Dorsolateral prefrontal cortex (tissue), 120 donors: ENCODE measurements at regions of chr16 and their contacts with region 1.

Region 1: DNA sequence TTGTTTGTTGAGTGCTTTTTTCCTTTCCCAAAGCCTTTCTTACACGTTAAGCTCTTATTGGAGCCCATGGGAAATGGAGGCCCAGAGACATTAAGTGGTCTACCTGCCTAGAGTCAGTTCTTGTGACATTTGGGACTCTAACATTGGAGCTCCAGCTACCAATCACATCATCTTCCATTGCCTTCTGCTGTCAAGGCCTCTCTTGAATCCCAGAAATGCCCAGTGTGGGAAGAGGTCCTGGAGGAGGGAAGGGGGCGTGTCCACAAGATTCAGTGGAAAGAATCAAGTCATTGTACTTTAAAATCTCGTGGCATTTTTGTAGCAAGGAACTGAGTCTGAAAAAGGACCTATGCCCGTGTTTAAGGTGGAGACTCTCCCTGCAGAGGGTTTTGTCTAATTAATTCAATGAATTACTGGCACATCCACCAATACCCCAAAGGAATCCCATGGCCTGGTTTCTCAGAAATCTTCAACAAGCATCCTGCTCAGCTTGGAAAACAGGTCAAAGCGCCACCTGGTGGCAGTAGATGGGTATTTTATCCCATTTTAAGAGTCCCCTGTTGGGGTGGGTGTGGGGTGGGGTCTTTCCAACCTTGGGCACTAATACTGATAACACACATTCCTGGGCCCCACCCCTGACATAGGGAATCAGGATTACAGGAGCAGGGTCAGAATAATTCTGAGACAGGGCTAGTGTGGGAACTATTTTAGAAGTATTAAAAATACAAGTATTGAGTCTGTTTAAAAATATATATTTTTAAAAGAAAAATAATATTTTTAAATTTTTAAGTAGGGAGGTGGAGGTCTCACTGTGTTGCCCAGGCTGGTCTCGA is 24.6 kb downstream of the GPT2 start:
- DNase-seq: peak in 4 of 10 donors; percentile 48 to 65 (median 60)
- H3K4me3 ChIP-seq: no peak overlapping the region
- H3K27ac ChIP-seq: peak overlapping the region in 57 of 59 donors; percentile 43 to 97 (median 88)
- H3K27me3 ChIP-seq: no peaks in the 10 kb centered on the region
- CTCF ChIP-seq: peak; percentile 75 to 94 (median 86)

Region 2: DNA sequence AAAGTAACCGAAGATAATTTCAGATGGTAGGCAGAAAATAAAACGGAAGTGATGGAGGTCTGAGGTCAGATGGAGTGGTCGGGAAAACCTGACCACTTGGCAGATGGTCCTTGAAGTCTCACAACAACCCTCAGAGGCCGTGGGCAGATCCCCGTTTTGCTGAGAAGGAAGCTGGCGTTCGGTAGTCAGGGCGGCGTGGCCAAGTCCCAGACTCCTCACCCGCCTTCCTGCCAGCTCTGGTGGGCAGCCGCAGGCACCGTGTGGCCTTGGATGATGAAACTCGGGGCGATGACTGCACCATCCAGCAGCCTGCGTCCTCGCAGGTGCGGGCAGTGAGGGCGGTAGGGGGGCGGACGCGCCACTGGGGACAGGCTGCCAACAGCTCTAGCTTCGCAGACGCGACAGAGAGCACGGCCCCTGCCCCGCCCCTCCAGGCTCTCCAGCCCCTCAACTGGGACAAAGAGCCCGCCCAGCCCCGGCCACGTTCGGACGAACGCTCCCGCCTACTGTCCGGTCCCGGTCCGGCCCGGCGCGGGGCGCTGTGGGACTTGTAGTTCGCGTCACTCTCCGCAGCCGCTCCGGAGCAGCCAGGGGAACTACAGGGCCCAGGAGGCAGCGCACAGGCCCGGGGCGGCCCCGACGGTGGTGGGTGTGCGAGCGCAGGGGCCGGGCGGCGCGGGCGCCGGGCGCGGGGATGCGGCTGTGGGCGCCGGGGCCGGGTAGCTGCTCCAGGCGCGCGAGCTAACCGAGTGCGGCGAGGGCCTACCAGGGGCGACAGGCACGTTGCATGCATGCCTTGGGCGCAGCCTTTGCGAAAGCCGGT is 24.9 kb before region 1 on chr16 and contains the start of gene GPT2:
- intact Hi-C with region 1: loop called (anchors 1 to 2 kb)
- DNase-seq: peak; percentile 96 to 100 (median 98)
- H3K4me3 ChIP-seq: peak within 1 kb of the TSS; percentile 61 to 98 (median 91)
- H3K27ac ChIP-seq: peak within 1 kb of the TSS; percentile 48 to 97 (median 90)
- H3K27me3 ChIP-seq: no peaks in the 10 kb centered on the region
- CTCF ChIP-seq: peak in 49 of 56 donors; percentile 9 to 69 (median 48)
- total RNA-seq, gene GPT2: 45.9 to 230 (median 67.8) TPM

Region 3: GRCh38 chr16:46929378-46930332 is 20.9 kb after region 1 on chr16:
- intact Hi-C with region 1: loop called in 1 of 2 experiments (anchors 2 kb)
- DNase-seq: peak; percentile 66 to 88 (median 80)
- H3K4me3 ChIP-seq: no peak overlapping the region
- H3K27ac ChIP-seq: peak overlapping the region in 55 of 59 donors; percentile 18 to 86 (median 66)
- H3K27me3 ChIP-seq: no peaks in the 10 kb centered on the region
- CTCF ChIP-seq: peak; percentile 76 to 98 (median 94)

Region 4: DNA sequence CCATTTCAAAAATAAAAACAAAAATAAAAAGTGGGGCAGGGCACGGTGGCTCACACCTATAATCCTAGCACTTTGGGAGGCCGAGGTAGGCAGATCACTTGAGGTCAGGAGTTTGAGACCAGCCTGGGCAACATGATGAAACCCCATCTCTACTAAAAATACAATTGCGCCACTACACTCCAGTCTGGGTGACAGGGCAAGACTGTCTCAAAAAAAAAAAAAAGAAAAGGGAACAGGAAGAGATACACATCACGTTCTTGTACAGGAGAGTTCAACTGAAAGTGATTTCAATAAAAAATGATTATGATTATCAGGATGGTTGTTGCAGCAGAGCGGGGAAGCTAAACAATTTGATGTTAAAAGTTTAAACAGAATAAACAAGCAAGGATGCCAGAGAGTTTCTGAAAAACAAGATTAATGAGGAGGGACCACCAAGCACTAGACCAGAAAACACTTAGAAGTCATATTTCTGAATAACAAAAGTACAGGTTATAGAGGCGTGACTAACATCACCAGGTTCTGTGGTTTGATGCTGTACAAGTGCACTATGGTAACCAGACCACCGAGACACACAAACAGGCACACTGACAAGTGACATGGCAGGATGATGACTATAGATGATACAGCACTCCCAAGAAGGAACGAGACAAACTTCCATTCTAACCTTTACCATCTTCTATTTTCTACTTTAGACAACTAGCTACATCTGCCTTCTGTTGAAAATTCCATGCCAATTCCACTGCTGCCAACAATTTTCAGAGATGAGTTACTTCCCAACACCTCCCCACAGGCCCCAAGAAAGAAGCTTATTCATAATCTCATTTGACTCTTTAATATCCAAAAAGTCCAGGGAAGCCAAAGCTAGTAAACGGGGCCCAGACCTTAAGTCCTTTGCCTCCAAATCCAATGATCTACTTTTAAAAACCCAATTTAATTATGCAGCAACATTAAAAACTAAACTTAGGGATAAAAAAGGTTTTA is 52.9 kb after region 1 on chr16:
- intact Hi-C with region 1: no loop called
- DNase-seq: peak in 1 of 10 donors; percentile 17
- H3K4me3 ChIP-seq: no peak overlapping the region
- H3K27ac ChIP-seq: peak overlapping the region in 24 of 59 donors; percentile 0 to 58 (median 30)
- H3K27me3 ChIP-seq: no peaks in the 10 kb centered on the region
- CTCF ChIP-seq: no peak